ENCODE measurements at regions of chr12 and their contacts with region 1.

Region 1: DNA sequence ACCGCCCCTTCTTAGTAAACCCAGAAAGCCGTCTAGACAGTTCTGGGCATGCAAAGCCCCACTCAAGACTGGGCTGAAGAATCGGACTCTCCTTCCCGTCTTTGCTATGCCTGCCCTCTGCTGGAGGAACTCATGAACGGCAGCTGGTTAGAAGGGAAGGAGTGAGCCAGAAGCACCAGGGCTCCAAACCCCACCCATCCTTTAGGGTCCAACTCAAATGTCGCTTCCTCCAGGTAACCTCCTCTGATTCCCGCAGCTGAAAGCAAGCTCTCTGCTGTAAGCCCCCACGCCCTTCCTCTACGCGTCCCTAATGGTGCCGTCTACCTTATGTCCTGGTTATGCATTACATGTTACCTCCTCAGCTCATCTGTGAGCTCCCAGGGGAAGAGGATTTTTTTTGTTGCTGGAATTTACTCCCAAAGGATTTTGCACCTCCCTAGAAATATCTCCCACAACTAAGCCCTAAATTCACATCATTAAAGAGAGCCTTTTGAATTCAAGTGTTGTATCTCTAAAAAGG is 59.0 kb upstream of the SCN8A start:
- DNase-seq: peak; percentile 86
- CTCF ChIP-seq: peak; percentile 94

Region 2: DNA sequence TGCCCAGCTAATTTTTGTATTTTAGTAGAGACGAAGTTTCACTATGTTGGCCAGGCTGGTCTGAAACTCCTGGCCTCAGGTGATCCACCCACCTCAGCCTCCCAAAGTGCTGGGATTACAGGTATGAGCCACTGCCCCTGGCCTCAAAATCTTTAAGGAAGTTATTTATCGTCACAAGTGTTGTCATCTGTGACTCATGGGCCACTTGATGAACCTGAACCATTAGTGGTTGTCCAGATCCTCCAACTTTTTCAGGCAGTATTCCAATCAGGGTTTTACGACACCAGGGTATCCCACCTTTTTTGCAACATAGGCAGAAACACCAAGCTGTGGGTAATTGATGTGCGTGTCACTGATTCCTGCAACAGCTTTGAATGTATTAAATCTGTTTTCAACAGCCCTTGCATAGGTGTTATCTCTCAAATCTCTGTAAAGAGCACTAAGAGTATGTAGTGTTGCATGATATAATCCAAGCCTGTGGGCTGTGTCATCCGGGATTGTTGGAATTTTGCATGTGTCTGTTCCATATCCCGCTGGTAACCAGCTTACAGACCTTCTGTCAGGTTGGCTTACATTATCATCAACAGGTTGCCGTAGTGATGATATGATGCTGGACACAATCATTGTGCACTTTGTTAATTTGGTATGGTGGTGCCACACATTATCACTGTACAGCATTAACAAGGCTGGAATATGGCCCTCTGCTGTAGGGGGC is 20.3 kb before region 1 on chr12:
- CTCF ChIA-PET with region 1: interaction called, 22 read pairs
- POLR2A ChIA-PET with region 1: no interaction called
- DNase-seq: no peak
- CTCF ChIP-seq: no peak

Region 3: GRCh38 chr12:51521554-51522276 is 10.3 kb before region 1 on chr12:
- CTCF ChIA-PET with region 1: interaction called, 21 read pairs
- POLR2A ChIA-PET with region 1: no interaction called
- DNase-seq: no peak
- CTCF ChIP-seq: no peak

Region 4: DNA sequence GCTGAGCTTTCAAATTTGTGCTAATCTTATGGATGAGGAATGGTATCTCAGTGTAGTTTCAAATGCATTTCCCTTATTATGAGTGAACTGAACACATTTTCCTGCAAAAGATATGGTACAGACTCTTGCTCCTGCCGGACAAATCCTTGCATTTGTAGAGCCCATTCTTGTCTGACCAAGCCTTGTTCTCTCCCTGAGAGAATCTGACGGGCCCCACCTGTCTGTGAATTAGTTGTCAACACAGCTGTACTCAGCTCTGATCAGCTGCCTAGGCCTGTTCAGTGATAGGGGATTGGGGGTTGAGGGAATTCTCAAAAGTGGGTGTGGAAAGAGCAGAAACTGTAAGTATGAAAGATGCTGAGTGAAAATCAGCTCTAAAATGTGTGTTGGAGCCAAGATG is 16.2 kb after region 1 on chr12:
- CTCF ChIA-PET with region 1: interaction called, 12 read pairs
- POLR2A ChIA-PET with region 1: no interaction called
- DNase-seq: no peak
- CTCF ChIP-seq: no peak

Measured in GM10248 (cell line).